ENCODE measurements at regions of chr14 and their contacts with region 1.

Region 1: DNA sequence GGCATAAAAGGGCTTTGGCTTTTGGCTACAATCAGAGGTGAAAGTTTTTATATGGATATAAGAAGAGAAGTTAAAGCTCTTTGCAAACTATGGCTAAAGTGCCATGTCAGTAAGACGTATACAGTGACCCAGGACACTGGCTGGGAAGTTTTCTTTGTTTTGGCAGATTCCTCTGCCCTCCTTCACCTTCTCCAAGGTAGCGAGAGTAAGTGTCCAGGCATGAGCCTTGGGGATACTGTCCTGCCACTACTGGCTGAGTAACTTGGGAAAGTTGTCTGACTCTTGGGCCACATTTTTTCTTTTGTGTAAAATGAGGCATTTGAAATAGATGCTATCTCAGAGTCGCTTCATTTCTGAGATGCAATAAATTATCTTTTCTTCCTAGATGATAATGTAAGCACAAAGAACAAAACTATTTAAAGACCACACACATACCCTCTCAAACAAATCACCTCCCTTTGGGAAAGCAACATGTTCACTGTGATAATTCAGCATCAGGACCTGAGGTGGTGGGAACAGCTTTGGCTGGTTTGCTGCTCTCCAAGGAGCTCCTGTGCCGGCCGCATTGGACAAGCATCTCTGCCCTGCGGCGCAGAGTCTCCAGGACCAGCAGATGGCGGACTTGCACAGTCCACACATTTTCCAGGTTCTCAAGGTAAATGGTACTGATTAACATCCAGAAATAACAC is 106.3 kb downstream of the PTCSC3 start:
- DNase-seq: peak; percentile 82
- ATAC-seq: peak; percentile 74
- H3K4me3 ChIP-seq: no peak overlapping the region
- H3K27ac ChIP-seq: no peak overlapping the region
- H3K4me1 ChIP-seq: peaks cover 25% of the 10 kb centered on the region
- H3K27me3 ChIP-seq: peaks cover 31% of the 10 kb centered on the region
- CTCF ChIP-seq: peak; percentile 93

Region 2: DNA sequence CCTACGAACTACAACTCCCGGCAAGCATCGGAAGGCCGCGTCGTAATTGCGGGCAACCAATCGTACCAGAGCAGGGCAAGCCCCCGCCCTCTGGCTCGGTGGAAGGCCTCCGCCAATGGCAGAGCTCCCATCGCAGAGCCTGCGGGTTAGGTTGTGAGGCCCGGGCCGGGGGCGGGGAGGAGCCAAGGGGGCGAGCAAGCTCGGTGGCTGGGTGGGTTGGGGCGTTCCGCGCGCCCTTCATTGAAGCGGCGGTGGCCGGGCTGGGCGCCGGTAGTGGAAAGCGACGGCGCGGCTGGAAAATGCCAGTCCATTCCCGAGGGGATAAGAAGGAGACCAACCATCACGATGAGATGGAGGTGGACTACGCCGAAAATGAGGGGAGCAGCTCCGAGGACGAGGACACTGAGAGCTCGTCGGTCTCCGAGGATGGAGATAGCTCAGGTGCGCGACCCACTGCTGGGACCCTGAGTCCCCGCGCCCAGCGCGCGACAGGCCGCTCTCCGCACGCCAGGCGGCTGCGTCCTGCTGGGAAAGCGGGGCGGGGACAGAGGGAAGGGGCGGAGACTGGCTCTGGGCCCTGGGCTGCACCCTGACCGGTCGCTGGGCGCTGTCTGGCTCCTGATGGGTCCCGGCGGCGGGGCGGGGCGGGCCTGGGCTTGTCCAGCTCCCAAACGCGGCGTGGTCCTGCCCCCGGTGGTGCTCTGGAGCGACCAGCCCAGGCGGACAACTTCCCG is 243.8 kb before region 1 on chr14 and contains the start of gene BRMS1L:
- CTCF ChIA-PET with region 1: no interaction called
- POLR2A ChIA-PET with region 1: no interaction called
- intact Hi-C with region 1: loop called (anchors 5 kb)
- DNase-seq: peak; percentile 99
- ATAC-seq: peak; percentile 90
- H3K4me3 ChIP-seq: peak within 1 kb of the TSS; percentile 91
- H3K27ac ChIP-seq: peak within 1 kb of the TSS; percentile 81
- H3K4me1 ChIP-seq: peaks cover 7% of the 10 kb centered on the region; the same call in 1 of the 2 replicates
- H3K27me3 ChIP-seq: no peaks in the 10 kb centered on the region
- CTCF ChIP-seq: no peak
- total RNA-seq, gene BRMS1L: 4.8 and 10.3 TPM in 2 replicates

Region 3: DNA sequence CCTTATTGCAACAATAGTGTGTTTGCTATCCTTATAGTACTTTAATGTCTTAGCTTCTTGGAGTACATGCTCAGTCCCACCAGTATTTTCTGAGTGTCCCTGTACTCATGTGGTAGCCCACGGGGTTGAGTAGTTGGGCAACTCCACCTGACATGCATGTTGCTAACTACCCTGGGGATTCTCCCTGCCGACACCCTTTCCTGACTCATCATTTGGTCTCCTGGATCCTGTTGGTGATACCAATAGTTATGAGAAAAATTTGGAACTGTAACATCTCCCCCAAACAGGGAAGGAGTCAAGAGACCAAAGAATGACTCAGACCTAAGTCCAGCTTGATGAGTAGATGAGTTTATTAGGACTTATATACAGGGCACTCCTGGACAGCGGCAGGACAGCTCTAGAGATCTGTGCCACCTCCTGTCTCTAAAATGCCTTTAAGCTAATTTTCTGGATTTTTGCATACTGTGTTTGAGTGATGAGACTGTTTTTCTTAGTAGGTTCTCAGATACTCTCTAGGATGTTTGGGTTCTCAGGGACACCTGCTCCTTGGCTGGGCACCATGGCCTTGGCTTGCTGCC is 142.4 kb before region 1 on chr14:
- CTCF ChIA-PET with region 1: no interaction called
- POLR2A ChIA-PET with region 1: no interaction called
- intact Hi-C with region 1: no loop called
- DNase-seq: peak; percentile 51
- ATAC-seq: peak; percentile 20; the same call in 1 of the 2 replicates
- H3K4me3 ChIP-seq: no peak overlapping the region
- H3K27ac ChIP-seq: no peak overlapping the region
- H3K4me1 ChIP-seq: no peaks in the 10 kb centered on the region
- H3K27me3 ChIP-seq: peaks cover 45% of the 10 kb centered on the region
- CTCF ChIP-seq: no peak

Region 4: DNA sequence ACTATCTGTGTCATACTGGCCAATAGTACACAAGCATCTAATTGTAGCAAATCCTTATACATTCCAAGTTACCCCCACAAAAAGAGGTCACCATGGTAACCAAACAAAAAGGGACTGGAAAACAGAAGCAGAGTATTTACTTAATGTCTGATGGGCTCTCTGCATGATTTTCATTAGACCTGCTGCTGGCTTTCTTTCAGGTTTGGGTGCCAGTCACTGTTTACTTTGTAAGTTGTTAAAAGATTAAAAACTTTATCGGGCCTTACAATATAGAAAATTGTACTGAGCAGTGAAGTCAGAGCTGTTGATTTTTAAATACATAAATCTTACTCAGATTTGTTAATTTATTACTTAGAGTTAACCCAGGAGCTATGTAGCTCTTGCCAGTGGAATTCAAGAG is 120.2 kb before region 1 on chr14:
- CTCF ChIA-PET with region 1: interaction called, 11 read pairs
- POLR2A ChIA-PET with region 1: no interaction called
- intact Hi-C with region 1: loop called (anchors 5 kb)
- DNase-seq: peak; percentile 61
- ATAC-seq: peak; percentile 53
- H3K4me3 ChIP-seq: no peak overlapping the region
- H3K27ac ChIP-seq: no peak overlapping the region
- H3K4me1 ChIP-seq: peaks cover 17% of the 10 kb centered on the region
- H3K27me3 ChIP-seq: peaks cover 9% of the 10 kb centered on the region
- CTCF ChIP-seq: no peak

Region 5: DNA sequence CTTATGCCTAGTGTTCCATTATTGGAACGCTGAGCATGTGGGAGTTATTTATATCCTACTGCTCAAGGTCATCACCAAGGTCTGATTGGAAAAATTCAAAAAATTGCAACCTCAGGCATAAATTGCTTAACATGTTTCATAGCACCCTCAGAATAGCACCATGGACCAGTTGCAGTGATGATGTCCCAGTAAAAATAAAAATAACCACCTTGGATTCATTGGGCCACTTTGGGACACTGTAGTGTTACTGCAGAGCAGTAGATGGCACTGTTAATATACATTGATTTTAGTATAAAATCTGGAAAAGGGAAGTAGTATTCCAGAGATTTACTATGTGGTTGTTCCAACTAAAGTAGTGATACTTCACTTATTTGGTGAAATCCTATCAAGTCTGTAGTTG is 137.3 kb after region 1 on chr14:
- CTCF ChIA-PET with region 1: no interaction called
- POLR2A ChIA-PET with region 1: no interaction called
- intact Hi-C with region 1: loop called (anchors 5 kb)
- DNase-seq: peak; percentile 51
- ATAC-seq: peak; percentile 85
- H3K4me3 ChIP-seq: no peak overlapping the region
- H3K27ac ChIP-seq: no peak overlapping the region
- H3K4me1 ChIP-seq: no peaks in the 10 kb centered on the region
- H3K27me3 ChIP-seq: peaks cover 44% of the 10 kb centered on the region
- CTCF ChIP-seq: peak; percentile 75

Region 6: GRCh38 chr14:36293824-36294223 is 223.6 kb after region 1 on chr14:
- CTCF ChIA-PET with region 1: interaction called, 12 read pairs
- POLR2A ChIA-PET with region 1: no interaction called
- intact Hi-C with region 1: loop called (anchors 10 kb)
- DNase-seq: no peak
- ATAC-seq: no peak
- H3K4me3 ChIP-seq: no peak overlapping the region
- H3K27ac ChIP-seq: no peak overlapping the region
- H3K4me1 ChIP-seq: no peaks in the 10 kb centered on the region
- H3K27me3 ChIP-seq: no peaks in the 10 kb centered on the region
- CTCF ChIP-seq: no peak

Region 7: GRCh38 chr14:36373982-36374673 is 304.0 kb after region 1 on chr14:
- CTCF ChIA-PET with region 1: interaction called, 5 read pairs
- POLR2A ChIA-PET with region 1: no interaction called
- intact Hi-C with region 1: loop called (anchors 1 kb)
- DNase-seq: peak; percentile 93
- ATAC-seq: peak; percentile 99
- H3K4me3 ChIP-seq: no peak overlapping the region
- H3K27ac ChIP-seq: no peak overlapping the region
- H3K4me1 ChIP-seq: no peaks in the 10 kb centered on the region
- H3K27me3 ChIP-seq: 0 out of 2 replicates have a peak, but pooled peaks cover 5% of the 10 kb centered on the region
- CTCF ChIP-seq: peak; percentile 93

Region 8: GRCh38 chr14:36604757-36605505 is 534.8 kb after region 1 on chr14:
- CTCF ChIA-PET with region 1: interaction called, 10 read pairs
- POLR2A ChIA-PET with region 1: no interaction called
- intact Hi-C with region 1: loop called (anchors 5 kb)
- DNase-seq: peak; percentile 90
- ATAC-seq: peak; percentile 84
- H3K4me3 ChIP-seq: no peak overlapping the region
- H3K27ac ChIP-seq: no peak overlapping the region
- H3K4me1 ChIP-seq: no peaks in the 10 kb centered on the region
- H3K27me3 ChIP-seq: peaks cover 42% of the 10 kb centered on the region
- CTCF ChIP-seq: peak; percentile 87